GM12878 (cell line): ENCODE measurements at regions of chr13 and their contacts with region 1.

Region 1: DNA sequence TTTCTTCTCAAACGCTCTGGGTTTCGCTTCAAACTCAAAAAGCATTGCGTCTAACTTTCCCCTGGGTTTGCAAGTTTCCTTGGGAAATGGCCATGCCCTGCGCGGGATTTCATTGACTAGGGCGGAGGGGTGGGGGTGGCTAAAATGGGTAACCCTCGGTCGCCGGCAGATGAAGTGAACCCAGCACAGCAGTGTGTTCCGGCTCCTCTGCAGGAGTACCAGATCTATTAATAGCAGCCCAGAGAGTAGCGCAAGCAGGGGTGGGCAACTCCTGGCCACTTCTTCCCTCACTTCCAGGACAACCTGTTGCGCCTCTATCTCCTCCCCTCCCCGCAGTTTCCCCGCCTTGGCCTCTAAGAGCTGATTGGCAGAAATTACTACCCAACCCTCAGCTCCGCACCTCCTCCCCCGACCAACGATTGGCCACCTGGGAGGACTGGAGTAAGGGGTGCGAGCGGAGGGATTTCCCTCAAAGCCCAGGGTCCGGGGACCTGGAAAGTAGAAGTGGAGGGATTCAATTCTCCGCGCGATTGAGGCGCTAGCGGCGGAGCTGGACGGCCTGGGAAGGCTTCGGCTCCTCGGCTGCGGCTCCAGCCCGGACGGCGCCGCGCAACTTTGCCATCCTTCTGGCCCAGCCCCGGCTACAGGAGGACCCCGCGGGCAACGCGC is at the start of gene FREM2:
- DNase-seq: no peak
- ATAC-seq: peak; percentile 72
- H3K4me3 ChIP-seq: no peak within 1 kb of the TSS
- H3K27ac ChIP-seq: no peak within 1 kb of the TSS
- H3K4me1 ChIP-seq: no peaks in the 10 kb centered on the region
- H3K27me3 ChIP-seq: peaks cover 0 to 9% of the 10 kb centered on the region in 2 experiments
- CTCF ChIP-seq: no peak
- EP300 ChIP-seq: no peak
- POLR2A ChIP-seq: no peak
- RAD21 ChIP-seq: no peak
- polyA plus RNA-seq, gene FREM2: 0.02 to 0.03 TPM

Region 2: GRCh38 chr13:38735721-38736440 is 49.2 kb after region 1 on chr13:
- CTCF ChIA-PET with region 1: no interaction called
- POLR2A ChIA-PET with region 1: no interaction called
- RAD21 ChIA-PET with region 1: no interaction called
- SMC1A ChIA-PET with region 1: no interaction called
- in situ Hi-C with region 1: no loop called
- intact Hi-C with region 1: no loop called
- DNase-seq: no peak
- ATAC-seq: no peak
- H3K4me3 ChIP-seq: no peak overlapping the region
- H3K27ac ChIP-seq: no peak overlapping the region
- H3K4me1 ChIP-seq: no peaks in the 10 kb centered on the region
- H3K27me3 ChIP-seq: no peaks in the 10 kb centered on the region
- CTCF ChIP-seq: no peak
- EP300 ChIP-seq: no peak
- POLR2A ChIP-seq: no peak
- RAD21 ChIP-seq: no peak

Region 3: DNA sequence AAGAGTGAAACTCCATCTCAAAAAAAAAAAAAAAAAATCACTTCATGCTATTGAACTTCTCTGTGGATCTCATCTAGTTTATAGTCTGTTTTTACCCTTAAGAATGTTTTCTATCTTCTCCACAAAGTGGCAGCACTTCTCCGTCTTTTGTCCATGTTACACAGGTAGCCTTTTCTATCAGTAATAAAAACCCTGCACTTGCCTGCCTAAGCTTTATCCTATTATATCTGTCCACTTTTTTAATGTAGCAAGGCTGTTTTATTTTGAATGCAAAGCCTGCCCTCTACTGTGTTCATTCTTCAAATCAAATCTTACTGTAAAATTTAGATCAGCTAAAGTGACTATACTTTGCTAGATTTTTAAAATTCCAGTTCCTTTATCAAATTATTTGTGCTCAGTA is 179.9 kb after region 1 on chr13:
- CTCF ChIA-PET with region 1: interaction called, 58 read pairs
- POLR2A ChIA-PET with region 1: interaction called, 3 read pairs
- RAD21 ChIA-PET with region 1: interaction called, 26 read pairs
- SMC1A ChIA-PET with region 1: interaction called, 68 read pairs
- in situ Hi-C with region 1: loop called (anchors 5 kb)
- intact Hi-C with region 1: no loop called
- DNase-seq: no peak
- ATAC-seq: no peak; the same call in 2 of the 3 replicates
- H3K4me3 ChIP-seq: no peak overlapping the region
- H3K27ac ChIP-seq: no peak overlapping the region
- H3K4me1 ChIP-seq: no peaks in the 10 kb centered on the region
- H3K27me3 ChIP-seq: no peaks in the 10 kb centered on the region; a peak in 1 of 4 replicates
- CTCF ChIP-seq: no peak; a peak in 1 of 6 replicates
- EP300 ChIP-seq: no peak
- POLR2A ChIP-seq: no peak
- RAD21 ChIP-seq: no peak; the same call in 1 of the 2 replicates